Gastrocnemius medialis (tissue), 4 donors: ENCODE measurements at regions of chr6 and their contacts with region 1.

Region 1: DNA sequence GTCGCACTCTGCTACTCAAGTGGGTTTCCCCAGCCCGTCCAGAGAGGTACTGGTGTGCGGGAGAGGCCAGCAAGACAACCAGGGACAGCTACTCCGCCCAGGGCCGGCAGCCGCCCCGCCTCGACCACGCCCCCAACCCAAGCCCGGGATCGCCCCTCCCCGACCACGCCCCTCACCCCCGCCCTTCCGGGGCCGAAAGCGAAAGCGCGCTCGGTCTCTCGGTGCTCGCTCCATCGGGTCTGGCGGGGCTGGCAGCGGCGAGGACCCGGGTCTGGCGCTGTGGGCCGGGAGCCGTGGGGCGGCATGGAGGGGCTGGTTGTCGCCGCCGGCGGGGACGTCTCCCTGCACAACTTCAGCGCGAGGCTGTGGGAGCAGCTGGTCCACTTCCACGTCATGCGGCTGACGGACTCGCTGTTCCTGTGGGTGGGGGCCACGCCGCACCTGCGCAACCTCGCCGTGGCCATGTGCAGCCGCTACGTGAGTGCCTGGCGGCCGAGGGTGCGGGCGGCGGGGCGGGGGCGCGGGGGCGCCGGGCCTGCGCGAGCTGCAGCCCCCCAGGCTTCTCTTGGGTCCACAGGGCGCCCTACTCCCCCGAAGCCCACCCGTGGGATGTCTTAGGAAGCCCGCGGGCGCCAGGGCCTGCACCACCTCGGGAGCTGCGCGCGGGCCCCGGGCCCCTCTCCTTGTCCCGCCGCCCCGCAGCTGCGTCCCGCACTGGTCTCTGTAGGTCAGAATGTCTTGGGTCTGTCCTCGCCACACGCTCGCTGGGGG is at the start of gene PSMG4:
- DNase-seq: peak; percentile 92 to 93
- ATAC-seq: peak; percentile 84 to 85
- H3K4me3 ChIP-seq: peak within 1 kb of the TSS; percentile 88 to 91 (median 90)
- H3K27ac ChIP-seq: peak within 1 kb of the TSS; percentile 84 to 93 (median 92)
- H3K4me1 ChIP-seq: peaks cover 33 to 41% of the 10 kb centered on the region in 2 donors
- H3K27me3 ChIP-seq: no peaks in the 10 kb centered on the region
- CTCF ChIP-seq: peak in 2 of 5 experiments; percentile 11 to 16
- POLR2A ChIP-seq: peak; percentile 82 to 84
- total RNA-seq, gene PSMG4: 16.4 to 27.6 (median 22.0) TPM

Region 2: GRCh38 chr6:2999618-3000557 is 259.0 kb before region 1 on chr6 and contains the start of gene NQO2:
- in situ Hi-C with region 1: loop called in 1 of 4 experiments (anchors 25 kb)
- intact Hi-C with region 1: loop called (anchors 5 kb)
- DNase-seq: peak; percentile 86 to 90
- ATAC-seq: peak; percentile 57 to 63
- H3K4me3 ChIP-seq: peak within 1 kb of the TSS; percentile 68 to 86 (median 76)
- H3K27ac ChIP-seq: peak within 1 kb of the TSS; percentile 90 to 96 (median 91)
- H3K4me1 ChIP-seq: peaks cover 21 to 32% of the 10 kb centered on the region in 2 donors
- H3K27me3 ChIP-seq: no peaks in the 10 kb centered on the region
- CTCF ChIP-seq: peak in 1 of 5 experiments; percentile 20
- POLR2A ChIP-seq: peak; percentile 97 to 98
- total RNA-seq, gene NQO2: 46.7 to 94.5 (median 60.3) TPM

Region 3: DNA sequence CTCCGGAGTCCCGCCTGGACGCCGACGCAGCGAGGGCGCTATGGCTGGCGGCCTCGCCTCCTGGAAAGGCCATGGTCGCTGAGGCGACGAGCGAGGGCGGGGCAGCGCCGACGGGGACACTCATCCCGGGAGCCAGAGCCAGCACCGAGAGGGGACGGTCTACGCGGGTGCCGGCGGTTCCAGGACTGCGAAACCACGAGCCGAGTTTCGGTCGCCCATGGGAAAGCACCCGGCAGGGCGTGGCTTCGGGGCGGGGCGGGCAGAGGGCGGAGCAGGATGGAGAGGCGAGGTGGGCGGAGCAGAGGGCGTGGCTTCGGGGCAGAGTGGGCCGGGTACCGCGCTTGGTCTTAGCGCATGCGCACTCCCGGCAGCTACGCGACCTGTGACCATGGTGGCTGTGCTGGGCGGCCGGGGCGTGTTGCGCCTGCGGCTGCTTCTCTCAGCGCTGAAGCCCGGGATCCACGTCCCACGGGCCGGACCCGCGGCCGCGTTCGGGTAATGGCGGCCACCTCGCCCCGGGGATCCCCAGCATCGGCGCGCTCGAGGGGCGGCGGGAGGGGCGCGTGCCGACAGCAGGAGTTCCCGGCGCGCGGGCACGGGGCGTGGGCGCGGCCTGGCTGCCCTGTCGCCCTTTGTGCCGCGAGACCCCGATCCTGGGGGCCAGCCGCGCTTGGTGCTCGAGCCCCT is 140.4 kb before region 1 on chr6 and contains the start of gene BPHL:
- in situ Hi-C with region 1: loop called in 1 of 4 experiments (anchors 10 kb)
- intact Hi-C with region 1: loop called (anchors 2 kb)
- DNase-seq: peak; percentile 95 to 96
- ATAC-seq: peak; percentile 96
- H3K4me3 ChIP-seq: peak within 1 kb of the TSS; percentile 78 to 90 (median 82)
- H3K27ac ChIP-seq: peak within 1 kb of the TSS; percentile 90 to 97 (median 96)
- H3K4me1 ChIP-seq: peaks cover 13 to 14% of the 10 kb centered on the region in 2 donors
- H3K27me3 ChIP-seq: no peaks in the 10 kb centered on the region
- CTCF ChIP-seq: no peak
- POLR2A ChIP-seq: peak; percentile 76
- total RNA-seq, gene BPHL: 4.7 to 8.7 (median 5.8) TPM

Region 4: GRCh38 chr6:3124667-3125066 is 134.2 kb before region 1 on chr6:
- in situ Hi-C with region 1: loop called in 3 of 4 experiments (anchors 5 to 10 kb)
- intact Hi-C with region 1: loop called (anchors 2 kb)
- DNase-seq: no peak
- ATAC-seq: no peak
- H3K4me3 ChIP-seq: no peak overlapping the region
- H3K27ac ChIP-seq: no peak overlapping the region
- H3K4me1 ChIP-seq: no peaks in the 10 kb centered on the region
- H3K27me3 ChIP-seq: no peaks in the 10 kb centered on the region
- CTCF ChIP-seq: no peak
- POLR2A ChIP-seq: no peak

Region 5: DNA sequence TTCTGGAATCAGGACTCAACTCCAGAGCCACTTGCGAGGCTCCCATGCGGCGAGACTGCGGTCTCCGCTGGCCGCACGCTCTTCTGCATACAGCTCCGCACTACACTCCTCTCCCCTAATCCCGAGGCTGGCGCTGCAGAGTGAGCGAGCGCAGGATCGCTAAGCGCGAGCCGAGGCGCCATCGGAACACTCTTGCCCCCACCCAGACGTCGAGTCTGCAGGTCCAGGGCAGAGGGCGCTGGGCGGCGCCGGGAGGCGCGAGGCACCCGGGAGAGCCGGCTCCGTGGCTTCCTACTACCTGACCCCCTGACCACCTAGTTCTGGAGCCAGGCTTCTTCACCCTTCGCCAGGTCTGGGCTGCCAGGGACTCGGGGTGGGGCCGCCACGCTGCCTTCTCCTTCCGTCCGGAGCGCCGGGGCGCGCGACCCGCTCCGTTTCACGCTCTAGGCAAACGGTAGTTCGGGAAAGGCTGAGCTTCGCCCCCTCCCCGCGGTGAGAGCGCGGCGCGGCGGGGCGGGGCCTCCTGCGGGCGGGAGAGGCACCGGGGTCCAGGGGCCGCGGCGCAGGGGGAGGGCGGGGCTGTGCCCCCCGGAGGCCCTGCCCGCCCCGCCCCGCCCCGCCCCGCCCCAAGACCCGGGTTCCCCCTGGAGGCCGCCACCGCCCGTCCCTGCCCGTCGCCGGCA is 96.2 kb before region 1 on chr6:
- in situ Hi-C with region 1: no loop called
- intact Hi-C with region 1: loop called (anchors 2 kb)
- DNase-seq: peak; percentile 40 to 60
- ATAC-seq: peak; percentile 74 to 82
- H3K4me3 ChIP-seq: peak overlapping the region; percentile 71 to 99 (median 82)
- H3K27ac ChIP-seq: peak overlapping the region; percentile 87 to 91 (median 88)
- H3K4me1 ChIP-seq: peaks cover 4% of the 10 kb centered on the region in 2 donors
- H3K27me3 ChIP-seq: no peaks in the 10 kb centered on the region
- CTCF ChIP-seq: peak in 1 of 5 experiments; percentile 30
- POLR2A ChIP-seq: peak; percentile 36 to 60

Region 6: GRCh38 chr6:3489027-3489757 is 230.3 kb after region 1 on chr6:
- in situ Hi-C with region 1: no loop called
- intact Hi-C with region 1: no loop called
- DNase-seq: no peak
- ATAC-seq: no peak
- H3K4me3 ChIP-seq: no peak overlapping the region
- H3K27ac ChIP-seq: no peak overlapping the region
- H3K4me1 ChIP-seq: no peaks in the 10 kb centered on the region
- H3K27me3 ChIP-seq: no peaks in the 10 kb centered on the region
- CTCF ChIP-seq: no peak
- POLR2A ChIP-seq: no peak